ENCODE measurements at regions of chr2 and their contacts with region 1.

Region 1: DNA sequence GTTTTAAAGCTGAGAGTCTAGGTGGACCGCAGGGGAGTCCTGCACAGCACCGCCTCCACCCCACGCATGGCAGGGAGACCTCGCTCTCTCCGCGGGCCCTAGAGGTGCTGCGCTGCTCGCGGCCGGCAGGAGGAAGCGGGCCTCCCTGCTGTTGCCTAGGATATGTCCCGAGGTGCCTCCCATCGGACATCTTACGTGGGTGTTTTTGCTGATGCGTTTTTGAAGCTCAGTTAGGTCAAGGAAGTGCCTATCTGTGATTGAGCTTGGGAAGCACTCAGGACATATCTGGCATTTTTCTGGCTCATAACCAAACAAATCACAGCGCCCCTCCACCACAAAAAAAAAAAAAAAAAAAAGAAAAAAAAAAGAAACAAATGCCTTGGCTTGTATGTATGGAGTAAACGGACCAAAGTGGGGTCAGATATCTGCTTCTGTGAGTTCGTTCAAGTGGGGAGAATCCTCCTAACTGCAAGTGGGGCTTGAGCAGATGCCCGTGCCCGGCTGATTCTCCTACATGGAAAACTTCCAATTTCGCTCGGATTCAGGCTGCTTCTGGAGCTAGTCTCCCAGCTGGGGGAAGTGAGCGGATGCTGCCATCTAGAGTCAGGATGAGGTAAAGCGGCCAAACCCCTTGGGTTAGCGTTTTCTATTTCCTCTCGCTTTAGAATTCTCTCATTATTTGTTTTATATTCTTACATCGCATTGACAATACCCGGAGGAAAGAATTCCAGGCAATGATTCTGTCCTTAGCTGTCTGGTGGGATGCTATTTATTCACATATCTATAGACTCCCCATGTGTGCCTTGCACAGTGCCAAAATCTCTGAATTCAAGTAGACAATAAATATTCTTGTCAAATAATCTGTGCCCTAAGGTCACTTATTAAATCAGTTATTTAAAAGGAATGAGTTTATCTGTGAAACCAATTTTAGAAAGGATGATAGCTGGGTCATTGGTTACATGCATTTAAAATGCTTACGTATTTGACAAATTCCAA is 95.3 kb downstream of the CD8B2 start:
- DNase-seq: peak; percentile 72
- ATAC-seq: peak; percentile 86

Region 2: GRCh38 chr2:106104332-106105062 is 477.9 kb before region 1 on chr2:
- intact Hi-C with region 1: loop called (anchors 5 kb)
- DNase-seq: no peak
- ATAC-seq: no peak

Region 3: GRCh38 chr2:106232638-106233349 is 349.7 kb before region 1 on chr2:
- intact Hi-C with region 1: loop called (anchors 10 kb)
- DNase-seq: no peak
- ATAC-seq: peak; percentile 96

Region 4: DNA sequence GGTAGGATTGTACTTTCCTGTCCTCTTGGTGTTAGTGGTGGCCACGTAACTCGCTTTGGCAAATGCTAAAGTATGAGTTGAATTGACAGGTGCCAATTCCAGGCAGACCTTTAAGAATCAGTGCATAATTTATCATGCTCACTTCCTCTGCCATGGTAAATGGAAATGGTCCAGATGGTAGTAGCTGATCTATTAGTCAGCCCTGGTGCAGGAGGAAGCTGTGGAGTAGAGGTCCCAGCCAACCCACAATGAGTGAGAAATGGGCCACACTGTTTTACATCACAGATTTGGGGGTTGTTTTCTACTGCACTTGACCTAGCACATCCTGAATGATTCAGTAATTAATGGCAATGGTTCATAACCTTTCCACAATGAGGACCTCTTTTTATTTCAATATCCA is 218.7 kb before region 1 on chr2:
- intact Hi-C with region 1: loop called (anchors 10 kb)
- DNase-seq: no peak
- ATAC-seq: no peak

Region 5: GRCh38 chr2:106542811-106543259 is 39.6 kb before region 1 on chr2:
- intact Hi-C with region 1: loop called (anchors 2 kb)
- DNase-seq: peak; percentile 80
- ATAC-seq: peak; percentile 88

Region 6: GRCh38 chr2:106562268-106563186 is 19.9 kb before region 1 on chr2:
- intact Hi-C with region 1: loop called (anchors 2 kb)
- DNase-seq: no peak
- ATAC-seq: peak; percentile 32

Measured in Right ventricle myocardium inferior (tissue), 1 donor.